Cardiac septum (tissue), 1 donor: ENCODE measurements at regions of chr19 and their contacts with region 1.

Region 1: DNA sequence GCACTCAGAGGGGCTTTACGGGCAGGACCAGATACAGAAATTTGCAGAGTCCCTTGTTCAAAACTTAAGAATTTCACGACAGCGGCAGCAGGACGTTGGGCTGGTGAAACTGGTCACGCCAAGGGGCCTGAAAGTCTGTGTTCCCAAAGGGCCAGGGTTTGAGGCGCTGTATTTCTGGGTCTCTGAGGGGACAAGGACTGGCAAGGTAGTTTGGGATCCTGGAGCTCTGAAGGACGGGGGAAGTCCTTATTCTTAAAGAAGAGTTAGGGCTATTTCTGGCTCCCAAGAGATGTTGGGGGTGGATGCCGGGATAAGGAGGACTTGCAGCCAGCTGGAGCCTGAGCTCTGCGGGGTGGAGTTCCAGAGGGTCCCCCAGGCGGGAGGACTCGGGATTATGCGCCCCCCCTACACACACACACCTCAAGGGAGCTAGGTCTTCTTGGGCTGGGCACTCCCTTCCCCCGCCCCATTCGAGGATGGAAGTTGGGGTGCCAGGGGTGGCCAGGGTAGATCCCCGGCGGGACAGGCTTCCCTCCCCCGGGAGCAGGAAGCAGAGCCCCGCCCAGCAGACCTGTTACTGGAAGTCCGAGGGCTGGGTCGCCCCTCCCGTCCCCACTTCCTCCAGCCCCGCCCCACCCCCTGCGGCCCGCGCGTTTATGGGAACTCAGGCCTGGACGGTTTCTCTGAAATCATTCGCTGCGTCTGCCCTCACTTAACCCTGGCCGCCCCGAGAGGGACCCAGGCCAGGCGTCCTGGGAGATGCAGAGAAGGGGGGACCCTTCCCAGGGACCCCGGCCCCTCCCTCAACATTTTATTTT is 5.6 kb downstream of the BCL3 start:
- DNase-seq: peak; percentile 98

Region 2: DNA sequence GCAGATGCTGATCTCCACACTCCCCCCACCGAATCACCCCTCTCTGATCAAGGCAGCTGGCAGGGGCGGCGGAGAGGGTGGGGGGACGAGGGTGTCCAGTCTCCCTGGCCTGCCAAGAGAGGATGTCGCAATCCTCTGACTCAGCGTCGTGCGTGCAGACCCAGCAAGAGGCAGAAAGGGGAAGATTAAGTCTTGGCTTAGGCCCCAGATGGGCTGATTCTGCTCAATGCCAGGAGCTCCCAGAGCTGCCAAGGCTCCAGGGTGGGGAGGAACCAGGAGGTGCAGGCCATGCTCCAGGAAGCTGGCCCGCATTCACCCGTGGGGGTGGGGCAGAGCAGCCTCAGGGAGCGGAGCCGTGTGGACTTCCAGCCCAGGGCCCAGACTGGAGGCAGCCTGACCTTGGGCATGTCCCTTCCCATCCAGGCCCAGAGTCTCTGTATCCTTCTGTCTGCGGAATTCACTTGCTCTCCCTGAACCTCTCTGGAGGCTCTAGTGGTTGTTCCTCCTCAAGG is 12.2 kb before region 1 on chr19:
- intact Hi-C with region 1: loop called (anchors 1 kb)
- DNase-seq: peak; percentile 99

Region 3: DNA sequence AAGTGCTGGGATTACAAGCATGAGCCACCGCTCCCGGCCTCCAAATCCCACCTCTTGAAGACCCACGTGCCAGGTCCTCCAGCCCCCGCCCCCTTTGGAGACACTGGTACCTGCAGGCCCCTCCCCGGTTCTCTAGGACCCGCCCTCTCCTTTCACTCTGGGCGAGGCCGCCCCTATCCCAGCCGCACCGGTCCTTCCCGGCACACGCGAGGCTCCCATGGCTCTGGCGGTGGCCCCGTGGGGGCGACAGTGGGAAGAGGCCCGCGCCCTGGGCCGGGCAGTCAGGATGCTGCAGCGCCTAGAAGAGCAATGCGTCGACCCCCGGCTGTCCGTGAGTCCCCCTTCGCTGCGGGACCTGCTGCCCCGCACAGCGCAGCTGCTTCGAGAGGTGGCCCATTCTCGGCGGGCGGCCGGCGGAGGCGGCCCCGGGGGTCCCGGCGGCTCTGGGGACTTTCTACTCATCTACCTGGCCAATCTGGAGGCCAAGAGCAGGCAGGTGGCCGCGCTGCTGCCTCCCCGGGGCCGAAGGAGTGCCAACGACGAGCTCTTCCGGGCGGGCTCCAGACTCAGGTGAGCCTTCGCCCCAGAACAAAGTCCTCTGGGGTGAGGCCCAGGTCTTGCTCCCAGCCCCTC is 23.7 kb after region 1 on chr19 and contains the start of gene CBLC:
- intact Hi-C with region 1: no loop called
- DNase-seq: no peak
- total RNA-seq, gene CBLC: not detected